ENCODE measurements at regions of chr17 and their contacts with region 1.

Region 1: DNA sequence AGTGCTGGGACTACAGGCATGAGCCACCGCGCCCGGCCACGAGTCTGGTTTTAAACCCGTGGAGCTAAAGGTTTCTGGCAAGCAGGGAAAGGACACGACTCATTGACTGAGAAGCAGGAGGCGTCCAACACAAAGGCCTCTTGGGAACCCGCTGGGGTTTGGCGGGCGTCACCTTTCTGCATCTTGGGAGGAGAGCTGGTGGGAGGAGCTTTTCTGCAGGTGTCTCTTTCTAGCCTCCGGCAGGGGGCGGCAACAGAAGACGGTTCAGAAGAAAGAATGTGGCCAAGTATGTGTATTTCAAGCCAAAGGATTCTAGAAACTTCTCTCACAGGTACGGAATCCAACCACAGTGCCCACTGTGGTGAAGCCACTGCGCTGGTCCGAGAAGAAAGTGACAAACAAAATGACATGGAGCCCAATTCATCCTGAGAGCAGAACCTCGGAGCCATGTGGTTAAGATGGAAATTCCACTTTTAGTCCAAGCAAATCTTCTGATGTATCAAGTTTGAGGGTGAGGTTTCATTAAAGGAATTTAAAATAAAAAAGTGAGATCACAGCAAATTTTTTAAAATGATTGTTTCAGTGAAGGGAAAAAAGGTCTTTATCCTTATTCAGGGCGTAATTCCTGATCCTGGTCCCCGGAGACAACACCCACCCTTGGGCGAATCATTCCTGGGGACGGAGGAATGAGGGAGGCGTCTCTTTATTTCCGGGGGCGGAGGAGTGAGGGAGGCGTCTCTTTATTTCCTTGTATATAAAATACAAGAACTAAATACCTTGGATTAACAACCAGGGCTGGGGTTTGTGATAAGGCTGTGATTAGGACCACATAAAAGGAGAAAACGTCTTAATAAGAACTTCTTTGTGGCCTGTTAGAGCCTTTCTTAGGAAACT is 97.6 kb downstream of the MRM3 start:
- DNase-seq: peak; percentile 86
- H3K4me3 ChIP-seq: no peak overlapping the region
- H3K27ac ChIP-seq: peak overlapping the region; percentile 80 to 90 (median 87)
- H3K4me1 ChIP-seq: peaks cover 0 to 70% (median 61%) of the 10 kb centered on the region in 4 donors
- H3K27me3 ChIP-seq: no peaks in the 10 kb centered on the region
- CTCF ChIP-seq: peak in 3 of 4 experiments; percentile 28 to 37 (median 36)
- EP300 ChIP-seq: no peak
- POLR2A ChIP-seq: no peak

Region 2: GRCh38 chr17:409848-410545 is 469.8 kb before region 1 on chr17:
- intact Hi-C with region 1: no loop called
- DNase-seq: peak; percentile 100
- H3K4me3 ChIP-seq: peak overlapping the region; percentile 64 to 98 (median 85)
- H3K27ac ChIP-seq: peak overlapping the region; percentile 70 to 87 (median 76)
- H3K4me1 ChIP-seq: peaks cover 0 to 25% (median 20%) of the 10 kb centered on the region in 4 donors
- H3K27me3 ChIP-seq: no peaks in the 10 kb centered on the region
- CTCF ChIP-seq: no peak
- EP300 ChIP-seq: no peak
- POLR2A ChIP-seq: no peak

Region 3: DNA sequence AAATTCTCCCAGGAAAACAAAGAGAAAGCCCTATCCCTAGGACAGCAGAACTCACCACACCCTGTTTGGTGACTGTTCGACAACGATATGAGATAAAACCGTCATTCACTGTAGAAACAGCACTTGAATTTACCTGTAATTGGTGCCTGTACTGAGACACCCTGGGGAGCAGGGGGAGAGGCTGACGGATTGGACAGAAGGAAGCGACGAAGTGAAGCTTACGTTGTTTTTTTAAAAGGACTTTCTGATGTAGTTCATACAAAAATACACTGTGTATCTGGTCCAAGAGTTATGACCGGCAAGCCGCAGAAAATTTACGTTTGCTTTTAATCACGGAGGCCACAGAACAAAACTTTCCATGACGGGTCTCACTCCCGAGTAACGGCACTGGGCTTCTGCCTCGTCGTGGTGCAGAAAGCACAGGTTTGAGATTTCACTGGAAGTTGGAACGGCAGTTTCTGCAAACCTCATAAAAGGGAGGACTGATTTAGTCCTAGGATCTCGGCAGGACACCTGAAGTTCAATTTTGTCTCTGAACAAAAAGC is 90.1 kb after region 1 on chr17:
- intact Hi-C with region 1: loop called (anchors 5 kb)
- DNase-seq: peak; percentile 89
- H3K4me3 ChIP-seq: peak overlapping the region; percentile 4 to 45 (median 34)
- H3K27ac ChIP-seq: peak overlapping the region; percentile 63 to 93 (median 86)
- H3K4me1 ChIP-seq: peaks cover 0 to 70% (median 57%) of the 10 kb centered on the region in 4 donors
- H3K27me3 ChIP-seq: no peaks in the 10 kb centered on the region
- CTCF ChIP-seq: no peak
- EP300 ChIP-seq: peak; percentile 57 to 97 (median 91)
- POLR2A ChIP-seq: no peak

Measured in sigmoid colon (tissue), 7 donors.